ENCODE measurements at regions of chr7 and their contacts with region 1.

Region 1: DNA sequence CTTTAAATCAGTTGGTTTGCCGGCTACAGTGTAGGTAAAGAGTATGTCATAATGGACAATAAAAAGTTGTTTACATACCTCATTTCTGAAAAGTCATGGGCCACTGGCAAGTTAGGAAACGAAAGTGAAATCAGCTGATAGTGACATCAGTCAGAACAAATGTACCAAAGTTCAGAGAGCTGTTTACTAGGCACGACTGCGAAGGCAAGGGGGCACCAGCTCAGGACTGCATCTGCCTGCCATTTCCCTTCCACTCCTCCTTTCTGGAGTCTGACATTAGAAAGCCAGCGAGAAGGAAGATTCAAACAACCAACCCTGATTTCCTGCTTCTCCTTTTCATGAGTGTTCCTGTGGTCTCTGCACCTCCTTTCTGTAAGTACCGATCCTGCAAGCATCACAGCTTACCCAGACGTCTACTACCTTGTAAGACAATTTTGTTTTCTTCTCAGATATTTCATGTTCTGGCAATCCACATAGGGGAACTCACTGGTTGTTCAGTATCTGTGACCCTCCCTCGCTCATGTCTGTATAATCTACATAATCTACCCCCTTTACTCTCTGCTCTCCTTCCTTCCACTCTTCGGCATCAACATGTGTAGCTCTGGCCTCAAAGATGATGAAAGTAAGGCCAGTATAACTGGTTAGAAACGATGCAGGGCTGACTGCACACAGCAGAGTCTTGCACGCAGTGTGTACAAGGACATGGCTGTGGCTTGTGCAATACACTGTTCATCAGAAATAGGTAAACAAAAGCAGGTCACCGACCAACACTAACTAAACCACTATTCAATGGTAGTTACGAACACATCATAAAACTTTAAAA is at the start of gene TMEM140:
- DNase-seq: peak; percentile 72
- H3K4me3 Mint-ChIP-seq: peak within 1 kb of the TSS; percentile 81
- H3K27ac Mint-ChIP-seq: peak within 1 kb of the TSS; percentile 91
- H3K4me1 Mint-ChIP-seq: peaks cover 49% of the 10 kb centered on the region
- H3K27me3 Mint-ChIP-seq: no peaks in the 10 kb centered on the region
- total RNA-seq, gene TMEM140: 8.1 to 9.2 TPM

Region 2: DNA sequence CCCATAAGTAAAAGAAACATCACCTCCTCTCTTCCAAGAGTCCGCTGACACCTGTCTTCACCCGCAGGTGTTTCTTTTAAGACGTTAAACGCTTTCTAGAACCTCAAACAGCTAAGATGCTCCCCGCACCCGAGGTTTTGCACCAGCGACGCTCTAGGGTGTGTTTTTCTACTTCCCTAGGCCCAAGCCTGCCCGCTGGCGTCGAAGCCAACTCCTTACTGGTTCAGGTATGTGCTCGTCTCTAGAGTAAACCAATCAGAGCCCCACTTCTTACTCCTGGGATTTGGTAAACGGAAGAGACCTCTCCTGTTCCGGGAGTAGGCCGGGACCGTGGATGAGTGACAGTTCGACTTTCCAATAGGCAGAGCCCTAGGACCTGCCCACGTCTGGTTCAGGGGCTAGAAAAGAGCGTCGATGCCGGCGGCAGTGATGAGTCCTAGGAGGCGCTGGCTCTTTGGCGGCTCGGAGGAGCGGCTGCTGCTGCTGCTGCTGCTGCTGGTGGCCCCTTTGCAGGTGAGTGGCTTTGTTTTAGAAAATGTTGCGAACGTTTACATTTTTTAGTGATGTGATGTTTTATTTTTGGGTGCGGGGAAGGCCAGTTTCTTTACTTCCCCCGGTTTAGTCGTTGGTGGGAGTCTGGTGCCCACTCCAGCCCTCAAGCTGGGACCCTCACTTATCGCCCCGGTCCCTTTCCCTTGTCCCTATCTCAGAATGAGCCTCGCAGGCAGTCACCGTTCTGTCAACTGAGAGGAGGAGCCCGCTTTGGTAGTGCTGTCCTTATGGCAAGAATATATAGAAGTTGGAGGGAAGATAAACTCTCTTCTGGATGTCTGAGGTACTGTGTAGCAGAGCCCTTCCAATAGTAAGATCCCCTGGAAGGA is 501.4 kb before region 1 on chr7 and contains the start of gene BPGM:
- CTCF ChIA-PET with region 1: interaction called, 5 read pairs
- intact Hi-C with region 1: loop called (anchors 1 kb)
- DNase-seq: peak; percentile 99
- H3K4me3 Mint-ChIP-seq: no peak within 1 kb of the TSS
- H3K27ac Mint-ChIP-seq: no peak within 1 kb of the TSS
- H3K4me1 Mint-ChIP-seq: peaks cover 37% of the 10 kb centered on the region
- H3K27me3 Mint-ChIP-seq: no peaks in the 10 kb centered on the region
- total RNA-seq, gene BPGM: 13.9 to 14.2 TPM

Region 3: DNA sequence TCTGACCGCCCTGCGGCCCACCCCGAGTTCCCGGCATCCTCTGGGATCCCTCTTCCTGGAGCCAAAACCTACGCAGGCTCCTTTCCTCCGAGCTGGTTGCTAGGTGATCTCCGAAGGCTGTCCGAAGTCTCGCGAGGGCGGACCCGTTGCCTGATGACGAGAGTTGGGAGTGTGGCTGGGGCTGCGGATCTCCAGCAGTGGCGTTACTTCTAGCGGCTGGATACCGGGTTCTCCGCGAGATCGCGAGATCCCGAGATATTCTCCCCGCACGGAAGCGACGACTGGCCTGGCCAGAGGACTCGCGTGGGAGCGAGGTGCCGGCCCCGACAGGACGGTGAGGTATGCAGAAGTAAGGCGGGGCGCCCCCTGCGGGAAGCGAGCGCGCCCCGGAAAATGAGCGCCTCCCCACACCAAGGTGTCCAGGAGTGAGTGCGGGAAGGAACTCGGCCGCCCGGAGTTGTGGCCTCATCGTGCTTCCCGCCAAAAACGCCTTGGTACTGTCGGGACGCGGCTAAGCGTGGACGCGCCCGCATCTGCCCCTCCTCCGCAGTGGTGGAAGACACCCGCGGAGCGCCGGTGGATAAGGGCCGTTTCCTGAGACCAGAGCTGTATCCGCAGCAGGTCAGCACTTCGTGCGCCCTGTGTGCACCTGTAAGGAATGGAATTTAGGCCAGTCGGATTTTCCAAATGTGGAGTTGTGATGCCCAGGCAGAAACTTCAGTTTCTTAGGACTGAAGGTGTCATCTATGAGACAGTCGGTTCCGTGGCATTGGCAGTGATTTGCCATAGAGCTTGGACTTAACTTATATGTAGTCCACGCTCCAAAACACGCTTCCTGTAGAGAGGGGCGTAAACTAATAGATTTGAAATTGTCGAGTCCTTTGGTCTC is 161.5 kb before region 1 on chr7 and contains the start of gene AGBL3:
- CTCF ChIA-PET with region 1: interaction called, 3 read pairs
- intact Hi-C with region 1: loop called (anchors 1 kb)
- DNase-seq: peak; percentile 97
- H3K4me3 Mint-ChIP-seq: peak within 1 kb of the TSS; percentile 96
- H3K27ac Mint-ChIP-seq: peak within 1 kb of the TSS; percentile 98
- H3K4me1 Mint-ChIP-seq: peaks cover 32% of the 10 kb centered on the region
- H3K27me3 Mint-ChIP-seq: no peaks in the 10 kb centered on the region
- total RNA-seq, gene AGBL3: 2.6 to 3.6 TPM

Region 4: DNA sequence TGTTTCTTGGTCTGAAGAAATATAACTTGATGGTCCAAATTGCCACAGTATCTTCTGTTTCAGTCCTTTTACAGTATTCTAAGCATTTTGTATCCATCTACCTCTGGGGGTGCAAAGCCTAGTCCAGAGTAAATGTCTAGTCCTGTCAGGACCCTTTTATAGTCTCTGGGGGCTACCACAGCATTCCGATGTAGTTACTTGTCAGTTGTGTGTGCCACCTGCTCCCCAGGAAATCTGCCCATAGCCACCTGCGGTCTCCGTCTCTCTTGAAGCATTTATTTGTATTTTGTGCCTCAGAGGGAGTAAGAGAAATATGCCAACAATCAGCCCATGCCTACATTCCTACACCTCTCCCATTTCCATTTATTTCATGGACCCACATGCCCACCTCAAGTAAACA is 149.0 kb before region 1 on chr7:
- CTCF ChIA-PET with region 1: no interaction called
- intact Hi-C with region 1: no loop called
- DNase-seq: no peak
- H3K4me3 Mint-ChIP-seq: no peak overlapping the region
- H3K27ac Mint-ChIP-seq: no peak overlapping the region
- H3K4me1 Mint-ChIP-seq: peaks cover 25% of the 10 kb centered on the region
- H3K27me3 Mint-ChIP-seq: no peaks in the 10 kb centered on the region

Region 5: GRCh38 chr7:135211179-135211945 is 63.3 kb after region 1 on chr7 and contains the start of gene WDR91:
- CTCF ChIA-PET with region 1: no interaction called
- intact Hi-C with region 1: loop called (anchors 1 kb)
- DNase-seq: peak; percentile 96
- H3K4me3 Mint-ChIP-seq: peak within 1 kb of the TSS; percentile 98
- H3K27ac Mint-ChIP-seq: peak within 1 kb of the TSS; percentile 85
- H3K4me1 Mint-ChIP-seq: peaks cover 41% of the 10 kb centered on the region
- H3K27me3 Mint-ChIP-seq: no peaks in the 10 kb centered on the region
- total RNA-seq, gene WDR91: 10.6 to 11.1 TPM

Region 6: GRCh38 chr7:135914346-135914745 is 766.2 kb after region 1 on chr7:
- CTCF ChIA-PET with region 1: no interaction called
- intact Hi-C with region 1: no loop called
- DNase-seq: no peak
- H3K4me3 Mint-ChIP-seq: no peak overlapping the region
- H3K27ac Mint-ChIP-seq: no peak overlapping the region
- H3K4me1 Mint-ChIP-seq: no peaks in the 10 kb centered on the region
- H3K27me3 Mint-ChIP-seq: no peaks in the 10 kb centered on the region

Region 7: GRCh38 chr7:135977007-135977741 is 829.1 kb after region 1 on chr7 and contains the start of gene MTPN:
- CTCF ChIA-PET with region 1: no interaction called
- intact Hi-C with region 1: loop called (anchors 5 kb)
- DNase-seq: peak; percentile 98
- H3K4me3 Mint-ChIP-seq: peak within 1 kb of the TSS; percentile 98
- H3K27ac Mint-ChIP-seq: peak within 1 kb of the TSS; percentile 86
- H3K4me1 Mint-ChIP-seq: peaks cover 71% of the 10 kb centered on the region
- H3K27me3 Mint-ChIP-seq: no peaks in the 10 kb centered on the region
- total RNA-seq, gene MTPN: 106 to 108 TPM